AG04450 (cell line): ENCODE measurements at regions of chr12 and their contacts with region 1.

Region 1: DNA sequence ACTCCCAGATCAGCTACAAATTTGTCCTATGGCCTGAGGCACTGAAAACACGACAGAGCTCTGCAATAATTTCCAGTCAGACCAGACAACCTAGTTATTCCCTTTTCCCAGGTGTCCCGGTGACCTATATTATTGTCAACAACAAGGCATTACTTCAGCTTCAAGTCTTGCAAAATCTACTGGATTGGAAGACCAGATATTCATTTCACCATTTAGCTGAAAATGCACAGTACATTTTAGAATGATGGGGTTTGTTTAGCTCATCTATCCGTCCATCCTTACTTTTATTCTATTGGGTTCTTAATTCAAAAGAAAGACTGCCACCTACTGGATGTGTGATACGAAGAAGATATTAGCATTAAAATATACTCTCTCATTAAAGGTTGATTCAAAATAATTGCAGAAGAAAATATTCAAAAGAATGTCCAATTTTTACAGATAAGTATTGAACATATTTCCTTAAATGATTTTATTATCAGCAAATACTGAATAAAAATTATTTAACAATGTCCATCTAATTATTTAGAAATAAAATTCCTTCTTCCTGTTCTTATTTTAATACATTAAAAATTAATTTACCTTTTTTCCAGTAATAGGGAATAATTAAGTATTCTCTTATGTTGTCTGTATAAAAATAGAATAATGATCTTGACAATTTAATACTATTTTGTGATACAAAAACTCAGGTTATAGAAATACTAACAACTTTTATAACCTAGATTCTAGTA is 244.9 kb upstream of the LRIG3 start:
- DNase-seq: peak; percentile 7
- H3K4me3 ChIP-seq: no peak overlapping the region
- H3K27ac ChIP-seq: no peak overlapping the region
- H3K27me3 ChIP-seq: no peaks in the 10 kb centered on the region
- CTCF ChIP-seq: peak; percentile 61

Region 2: DNA sequence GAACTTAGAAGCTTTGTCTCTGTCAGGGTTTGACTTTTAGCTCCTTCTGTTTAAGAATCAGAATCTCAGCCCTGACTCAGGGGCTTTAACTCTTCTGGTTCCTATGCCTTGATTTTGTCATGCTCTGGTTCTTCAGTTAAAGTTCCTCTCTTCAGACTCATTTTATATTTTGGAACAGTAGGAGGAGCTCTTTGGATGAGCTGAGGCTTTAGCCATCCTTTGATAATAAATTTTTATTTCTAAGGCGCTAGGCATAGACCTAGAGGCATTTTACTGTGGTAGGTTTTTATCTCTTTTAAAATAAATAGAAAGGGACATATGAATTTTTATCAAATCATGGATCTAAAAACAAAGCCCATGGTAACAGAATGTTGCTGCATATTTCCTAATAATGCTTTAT is 1172.1 kb before region 1 on chr12:
- CTCF ChIA-PET with region 1: interaction called, 12 read pairs
- POLR2A ChIA-PET with region 1: no interaction called
- DNase-seq: no peak
- H3K4me3 ChIP-seq: no peak overlapping the region
- H3K27ac ChIP-seq: no peak overlapping the region
- H3K27me3 ChIP-seq: peaks cover 3% of the 10 kb centered on the region
- CTCF ChIP-seq: peak; percentile 41

Region 3: DNA sequence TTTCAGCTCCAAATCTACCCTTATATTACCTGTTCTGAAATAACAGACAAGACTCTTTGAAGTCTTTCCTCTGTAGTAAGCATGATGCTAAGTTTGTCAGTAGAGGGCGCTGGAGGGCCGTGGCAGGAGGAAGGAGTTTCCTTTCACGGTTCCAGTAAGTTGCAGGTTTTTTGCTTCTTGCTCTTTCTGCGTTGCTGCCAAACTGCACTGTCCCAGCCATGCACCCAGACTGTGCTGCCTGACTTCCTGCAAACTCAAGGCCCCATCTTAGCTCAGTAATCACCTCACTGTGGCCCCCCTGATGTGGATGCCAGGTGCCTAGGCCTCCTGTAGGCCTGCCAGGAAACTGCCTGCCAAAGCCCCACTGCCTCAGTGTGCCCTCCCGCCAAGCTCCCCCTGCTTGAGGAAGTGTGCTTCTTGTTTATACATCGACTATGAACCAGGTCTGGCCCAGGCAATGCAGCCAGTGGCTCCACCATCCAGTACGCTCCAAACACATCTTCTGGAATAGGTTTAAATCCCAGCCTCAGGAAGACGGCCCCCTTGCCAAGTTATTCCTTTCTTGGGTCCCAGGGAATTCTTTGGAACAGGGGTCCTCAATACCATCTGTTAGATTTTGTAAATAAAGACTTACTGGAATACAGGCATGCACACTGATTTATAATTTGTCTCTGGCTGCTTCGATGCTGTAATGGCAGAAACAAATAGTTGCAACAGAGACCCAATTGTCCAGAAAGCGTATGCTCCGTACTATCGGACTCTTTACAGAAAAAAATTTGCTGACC is 51.1 kb before region 1 on chr12:
- CTCF ChIA-PET with region 1: interaction called, 58 read pairs
- POLR2A ChIA-PET with region 1: no interaction called
- DNase-seq: peak; percentile 69
- H3K4me3 ChIP-seq: no peak overlapping the region
- H3K27ac ChIP-seq: no peak overlapping the region
- H3K27me3 ChIP-seq: no peaks in the 10 kb centered on the region
- CTCF ChIP-seq: peak; percentile 98